Caco-2 (cell line): ENCODE measurements at regions of chr6 and their contacts with region 1.

Region 1: GRCh38 chr6:44456070-44456965 is 68.8 kb downstream of the CDC5L start:
- DNase-seq: peak in 1 of 2 experiments; percentile 59
- H3K4me3 ChIP-seq: peak overlapping the region; percentile 3; the same call in 1 of the 2 replicates
- H3K4me3 Mint-ChIP-seq: no peak overlapping the region
- H3K27ac Mint-ChIP-seq: no peak overlapping the region
- H3K4me1 ChIP-seq: no peaks in the 10 kb centered on the region
- H3K4me1 Mint-ChIP-seq: peaks cover 8% of the 10 kb centered on the region
- H3K27me3 ChIP-seq: no peaks in the 10 kb centered on the region
- H3K27me3 Mint-ChIP-seq: no peaks in the 10 kb centered on the region
- CTCF ChIP-seq: peak; percentile 71 to 89

Region 2: DNA sequence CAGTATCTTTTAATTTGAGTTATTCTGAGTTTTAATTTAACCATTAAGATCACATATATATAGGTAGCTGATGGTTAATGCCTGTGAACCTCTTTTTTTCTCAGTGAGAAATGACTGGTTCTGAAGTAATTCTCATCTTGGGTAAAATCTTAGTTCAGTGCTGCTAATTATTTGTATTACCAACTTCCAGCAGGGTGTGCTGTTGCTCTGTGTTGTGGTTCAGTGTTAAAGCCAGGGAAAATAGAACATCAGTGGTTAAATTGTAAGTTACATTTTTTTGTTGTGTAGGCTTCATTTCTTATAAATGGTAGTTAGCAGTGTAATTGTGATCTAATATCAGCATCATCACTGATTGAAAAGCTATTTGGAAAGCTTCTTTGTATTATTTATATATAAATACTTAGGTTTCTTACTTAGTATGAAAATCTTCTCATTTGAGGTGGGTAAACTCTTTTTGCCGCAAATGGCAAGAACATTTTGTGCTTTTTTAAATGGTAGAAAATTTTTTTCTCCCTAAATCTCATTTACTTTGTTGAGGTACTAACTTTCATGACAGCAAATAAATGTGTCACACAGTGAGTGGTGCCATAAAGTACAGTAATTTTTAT is 25.1 kb before region 1 on chr6:
- CTCF ChIA-PET with region 1: no interaction called
- POLR2A ChIA-PET with region 1: no interaction called
- intact Hi-C with region 1: loop called (anchors 1 kb)
- DNase-seq: peak in 1 of 2 experiments; percentile 49
- H3K4me3 ChIP-seq: no peak overlapping the region
- H3K4me3 Mint-ChIP-seq: no peak overlapping the region
- H3K27ac Mint-ChIP-seq: no peak overlapping the region
- H3K4me1 ChIP-seq: no peaks in the 10 kb centered on the region
- H3K4me1 Mint-ChIP-seq: no peaks in the 10 kb centered on the region
- H3K27me3 ChIP-seq: no peaks in the 10 kb centered on the region
- H3K27me3 Mint-ChIP-seq: no peaks in the 10 kb centered on the region
- CTCF ChIP-seq: peak; percentile 38 to 73

Region 3: GRCh38 chr6:44485601-44486401 is 29.5 kb after region 1 on chr6:
- CTCF ChIA-PET with region 1: no interaction called
- POLR2A ChIA-PET with region 1: no interaction called
- intact Hi-C with region 1: no loop called
- DNase-seq: no peak
- H3K4me3 ChIP-seq: no peak overlapping the region
- H3K4me3 Mint-ChIP-seq: no peak overlapping the region
- H3K27ac Mint-ChIP-seq: no peak overlapping the region
- H3K4me1 ChIP-seq: no peaks in the 10 kb centered on the region
- H3K4me1 Mint-ChIP-seq: no peaks in the 10 kb centered on the region
- H3K27me3 ChIP-seq: no peaks in the 10 kb centered on the region; the same call in 1 of the 2 replicates
- H3K27me3 Mint-ChIP-seq: peaks cover 11% of the 10 kb centered on the region
- CTCF ChIP-seq: no peak